Activated B cell treated with CpG ODN at 0.5 μM for 24 hours (primary cell): ENCODE measurements at regions of chr2 and their contacts with region 1.

Region 1: DNA sequence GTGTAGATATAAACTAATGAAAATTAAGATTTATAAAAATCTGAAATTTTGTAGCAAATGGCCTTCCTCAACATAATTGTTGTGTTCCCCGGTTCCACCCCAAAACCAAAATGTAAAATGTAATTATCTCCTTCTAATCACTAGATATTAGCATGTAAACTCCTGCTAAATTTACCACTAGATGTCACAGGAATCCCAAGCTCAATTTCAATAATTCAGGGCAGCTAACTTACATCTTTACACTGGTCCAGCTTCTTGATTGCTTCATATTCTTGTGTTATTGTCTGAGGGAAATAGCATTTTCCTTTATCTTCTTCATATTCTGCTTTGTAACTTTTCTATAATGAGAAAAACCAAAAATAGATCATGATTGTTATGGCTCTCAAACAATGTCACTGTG is 42.6 kb downstream of the NEB start:
- DNase-seq: no peak
- ATAC-seq: no peak
- H3K4me3 Mint-ChIP-seq: no peak overlapping the region
- H3K27ac Mint-ChIP-seq: no peak overlapping the region
- H3K4me1 Mint-ChIP-seq: no peaks in the 10 kb centered on the region
- H3K27me3 Mint-ChIP-seq: no peaks in the 10 kb centered on the region
- CTCF ChIP-seq: no peak

Region 2: GRCh38 chr2:151730262-151730975 is 38.8 kb after region 1 on chr2:
- CTCF ChIA-PET with region 1: no interaction called
- POLR2A ChIA-PET with region 1: no interaction called
- intact Hi-C with region 1: loop called (anchors 5 kb)
- DNase-seq: no peak
- ATAC-seq: peak; percentile 38
- H3K4me3 Mint-ChIP-seq: peak overlapping the region; percentile 39
- H3K27ac Mint-ChIP-seq: peak overlapping the region; percentile 67
- H3K4me1 Mint-ChIP-seq: peaks cover 36% of the 10 kb centered on the region
- H3K27me3 Mint-ChIP-seq: no peaks in the 10 kb centered on the region
- CTCF ChIP-seq: no peak

Region 3: DNA sequence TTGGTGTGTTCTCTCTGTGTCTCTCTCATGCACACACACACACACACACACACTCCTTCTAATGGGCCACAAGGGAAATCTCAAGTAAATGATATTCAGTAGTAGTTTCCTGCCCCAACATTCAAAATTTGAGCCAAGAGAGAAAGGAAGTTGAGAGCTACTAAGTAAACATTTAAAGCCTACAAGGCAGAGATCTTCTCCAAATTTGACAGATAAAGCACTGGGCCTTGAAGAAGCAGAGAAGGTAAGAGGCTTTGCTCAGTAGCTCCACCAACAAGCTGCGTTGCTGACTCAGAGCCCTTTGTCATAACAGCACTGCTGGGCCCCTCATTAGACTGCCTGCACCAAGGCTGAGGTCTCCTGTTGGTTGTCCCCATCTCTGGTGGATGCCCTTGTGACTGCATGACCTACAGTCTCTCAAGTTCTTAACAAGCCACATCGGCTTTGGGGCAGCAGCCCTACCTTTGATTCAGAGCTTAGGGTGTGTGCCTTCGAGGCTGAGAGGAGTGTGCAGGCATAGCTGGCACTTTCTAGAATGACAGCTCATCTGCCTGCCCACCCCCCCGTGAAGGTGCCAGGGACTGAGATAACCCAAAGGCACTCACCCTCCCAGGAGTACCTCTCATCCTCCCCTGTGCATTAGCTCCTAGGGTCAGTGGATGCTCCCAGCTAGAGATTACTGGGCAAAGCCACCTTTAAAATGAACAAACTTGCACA is 75.0 kb after region 1 on chr2:
- CTCF ChIA-PET with region 1: interaction called, 8 read pairs
- POLR2A ChIA-PET with region 1: interaction called, 4 read pairs
- intact Hi-C with region 1: loop called (anchors 2 kb)
- DNase-seq: peak; percentile 47
- ATAC-seq: peak; percentile 71
- H3K4me3 Mint-ChIP-seq: peak overlapping the region; percentile 56
- H3K27ac Mint-ChIP-seq: peak overlapping the region; percentile 95
- H3K4me1 Mint-ChIP-seq: peaks cover 90% of the 10 kb centered on the region
- H3K27me3 Mint-ChIP-seq: no peaks in the 10 kb centered on the region
- CTCF ChIP-seq: no peak

Region 4: GRCh38 chr2:151792589-151792988 is 101.0 kb after region 1 on chr2:
- CTCF ChIA-PET with region 1: interaction called, 8 read pairs
- POLR2A ChIA-PET with region 1: interaction called, 3 read pairs
- intact Hi-C with region 1: loop called (anchors 1 kb)
- DNase-seq: no peak
- ATAC-seq: peak; percentile 62
- H3K4me3 Mint-ChIP-seq: no peak overlapping the region
- H3K27ac Mint-ChIP-seq: no peak overlapping the region
- H3K4me1 Mint-ChIP-seq: peaks cover 8% of the 10 kb centered on the region
- H3K27me3 Mint-ChIP-seq: no peaks in the 10 kb centered on the region
- CTCF ChIP-seq: no peak

Region 5: DNA sequence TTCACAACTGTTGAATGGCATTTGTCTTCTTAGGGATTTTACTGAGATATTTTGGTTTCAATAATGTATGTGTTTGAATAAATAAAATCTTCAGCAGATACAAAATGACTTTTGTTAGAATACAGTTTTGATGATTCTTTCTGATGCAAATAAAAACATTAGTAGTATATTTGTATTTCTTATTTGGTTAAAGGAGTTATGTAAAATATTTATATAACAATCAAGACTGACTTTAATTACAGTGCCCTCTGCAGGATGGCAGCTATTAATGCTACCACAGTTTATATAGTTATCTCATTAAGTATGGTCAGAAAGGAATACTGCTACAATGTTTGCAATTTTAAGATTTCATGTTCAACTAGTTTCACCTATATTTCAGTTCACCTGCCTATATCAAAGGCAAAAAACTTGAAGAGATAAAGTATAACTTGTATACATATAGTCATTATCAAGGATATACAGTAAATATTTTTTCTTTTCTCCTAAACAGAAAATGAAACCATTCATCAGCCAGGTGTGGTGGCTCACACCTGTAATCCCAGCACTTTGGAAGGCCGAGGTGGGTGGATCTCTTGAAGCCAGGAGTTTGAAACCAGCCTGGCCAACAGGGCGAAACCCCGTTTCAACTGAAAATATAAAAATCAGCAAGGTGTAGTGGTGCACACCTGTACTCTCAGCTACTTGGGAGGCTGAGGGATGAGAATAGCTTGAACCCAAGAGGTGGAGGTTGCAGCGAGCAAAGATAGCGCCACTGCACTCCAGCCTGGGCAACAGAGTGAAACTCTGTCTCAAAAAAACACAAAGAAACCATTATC is 116.8 kb after region 1 on chr2:
- CTCF ChIA-PET with region 1: interaction called, 18 read pairs
- POLR2A ChIA-PET with region 1: interaction called, 3 read pairs
- intact Hi-C with region 1: loop called (anchors 1 kb)
- DNase-seq: no peak
- ATAC-seq: peak; percentile 60
- H3K4me3 Mint-ChIP-seq: no peak overlapping the region
- H3K27ac Mint-ChIP-seq: no peak overlapping the region
- H3K4me1 Mint-ChIP-seq: peaks cover 4% of the 10 kb centered on the region
- H3K27me3 Mint-ChIP-seq: no peaks in the 10 kb centered on the region
- CTCF ChIP-seq: peak; percentile 20

Region 6: GRCh38 chr2:151999053-151999452 is 307.4 kb after region 1 on chr2:
- CTCF ChIA-PET with region 1: interaction called, 4 read pairs
- POLR2A ChIA-PET with region 1: no interaction called
- intact Hi-C with region 1: loop called (anchors 1 kb)
- DNase-seq: peak; percentile 18
- ATAC-seq: peak; percentile 58
- H3K4me3 Mint-ChIP-seq: no peak overlapping the region
- H3K27ac Mint-ChIP-seq: no peak overlapping the region
- H3K4me1 Mint-ChIP-seq: peaks cover under 1% of the 10 kb centered on the region
- H3K27me3 Mint-ChIP-seq: no peaks in the 10 kb centered on the region
- CTCF ChIP-seq: peak; percentile 52